A549 (cell line): ENCODE measurements at regions of chr9 and their contacts with region 1.

Region 1: GRCh38 chr9:137521405-137521985 is 28.7 kb downstream of the PNPLA7 start:
- DNase-seq: no peak
- ATAC-seq: no peak
- H3K4me3 ChIP-seq: no peak overlapping the region
- H3K27ac ChIP-seq: no peak overlapping the region
- H3K4me1 ChIP-seq: no peaks in the 10 kb centered on the region
- CTCF ChIP-seq: no peak
- EP300 ChIP-seq: no peak
- POLR2A ChIP-seq: no peak
- RAD21 ChIP-seq: no peak

Region 2: DNA sequence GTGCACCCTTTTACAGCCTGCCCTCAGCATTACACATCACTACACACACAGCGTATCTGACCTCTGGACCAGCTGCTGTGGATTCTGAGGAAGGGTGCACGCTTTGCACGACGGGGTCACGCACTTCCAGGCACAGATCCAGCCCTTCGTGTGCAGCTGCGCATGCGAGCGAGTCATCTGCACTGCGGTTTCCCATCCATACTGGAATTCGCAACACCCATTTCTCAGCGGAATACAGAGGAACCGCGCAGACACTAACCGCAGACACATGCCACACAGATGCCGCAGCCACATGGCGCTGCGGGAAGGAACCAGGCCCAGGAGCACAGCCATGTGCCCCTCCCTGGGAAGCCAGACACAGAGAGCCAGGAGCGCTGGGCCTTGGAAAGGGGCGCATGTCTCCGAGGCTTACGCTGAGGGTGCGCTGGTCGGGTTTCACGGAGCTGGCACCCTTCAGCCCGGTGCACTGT is 14.8 kb before region 1 on chr9:
- CTCF ChIA-PET with region 1: interaction called, 11 read pairs
- POLR2A ChIA-PET with region 1: no interaction called
- DNase-seq: no peak
- ATAC-seq: peak in 1 of 2 experiments; percentile 48; a peak in 2 of 6 replicates
- H3K4me3 ChIP-seq: no peak overlapping the region
- H3K27ac ChIP-seq: no peak overlapping the region
- H3K4me1 ChIP-seq: peaks cover 13% of the 10 kb centered on the region; the same call in 2 of the 3 replicates
- CTCF ChIP-seq: no peak
- EP300 ChIP-seq: no peak
- POLR2A ChIP-seq: no peak
- RAD21 ChIP-seq: no peak